ENCODE measurements at regions of chr12 and their contacts with region 1.

Region 1: DNA sequence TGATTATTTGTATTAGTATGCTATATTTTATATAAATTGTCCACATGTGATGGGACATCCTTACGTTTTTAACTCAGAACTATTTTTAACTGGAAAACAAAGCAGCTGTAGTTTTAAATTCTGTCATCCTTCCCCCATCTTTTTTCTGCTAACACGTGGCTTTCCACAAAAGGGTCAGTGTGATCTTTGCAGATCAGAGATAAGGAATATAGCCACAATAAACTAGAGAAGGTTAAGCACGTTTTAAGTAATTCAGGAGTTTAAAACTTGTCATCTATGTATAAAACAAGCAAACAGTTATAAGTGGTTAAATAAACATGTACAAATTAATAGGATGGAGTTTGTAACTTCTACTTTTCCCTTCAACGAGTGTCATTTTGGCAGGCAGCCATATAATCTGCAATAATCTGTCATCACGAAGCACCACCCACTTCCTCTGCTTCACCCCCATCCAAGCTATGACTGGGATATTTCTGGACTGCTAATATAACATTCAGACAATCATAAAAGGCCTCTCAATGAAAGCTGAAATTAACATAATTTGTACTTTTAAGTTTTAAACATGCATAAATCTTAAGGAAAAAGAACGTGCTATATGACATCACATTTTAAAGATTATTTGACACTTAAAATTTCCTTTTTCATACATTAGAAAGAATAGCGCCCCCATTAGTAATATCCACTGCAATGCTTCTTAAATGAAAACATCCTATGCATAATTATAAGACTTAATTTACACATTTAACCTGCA is 15.3 kb downstream of the TAOK3 start:
- DNase-seq: peak; percentile 60
- CTCF ChIP-seq: peak; percentile 32

Region 2: DNA sequence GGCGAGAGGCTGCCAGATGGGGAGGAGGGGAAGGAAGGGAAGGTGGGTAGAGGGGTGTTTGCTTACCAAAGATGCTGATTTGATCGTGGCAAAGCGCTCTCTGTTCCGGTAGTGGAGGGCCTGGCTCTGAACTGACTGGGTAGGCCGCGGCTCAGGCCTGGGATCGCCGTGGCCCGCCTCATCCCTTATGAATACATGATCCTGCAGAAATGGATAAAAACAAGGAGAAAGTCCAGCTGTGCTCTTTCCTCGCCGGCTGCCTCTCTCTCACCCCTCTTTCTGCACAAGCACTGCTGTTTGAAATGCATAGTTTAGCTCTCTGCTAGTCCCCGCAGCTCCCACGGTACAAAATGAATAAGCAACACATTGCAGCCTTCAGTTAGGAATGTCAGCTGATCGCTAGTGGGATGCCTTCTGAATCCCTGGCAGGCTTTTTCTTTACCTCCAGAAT is 167.7 kb before region 1 on chr12:
- in situ Hi-C with region 1: loop called (anchors 10 kb)
- DNase-seq: no peak
- CTCF ChIP-seq: no peak

Region 3: GRCh38 chr12:118526255-118527095 is 169.0 kb after region 1 on chr12:
- in situ Hi-C with region 1: no loop called
- DNase-seq: no peak
- CTCF ChIP-seq: no peak